ENCODE measurements at regions of chr16 and their contacts with region 1.

Region 1: GRCh38 chr16:66247516-66248481 is 118.7 kb upstream of the CDH5 start:
- DNase-seq: peak; percentile 88
- ATAC-seq: peak; percentile 82

Region 2: DNA sequence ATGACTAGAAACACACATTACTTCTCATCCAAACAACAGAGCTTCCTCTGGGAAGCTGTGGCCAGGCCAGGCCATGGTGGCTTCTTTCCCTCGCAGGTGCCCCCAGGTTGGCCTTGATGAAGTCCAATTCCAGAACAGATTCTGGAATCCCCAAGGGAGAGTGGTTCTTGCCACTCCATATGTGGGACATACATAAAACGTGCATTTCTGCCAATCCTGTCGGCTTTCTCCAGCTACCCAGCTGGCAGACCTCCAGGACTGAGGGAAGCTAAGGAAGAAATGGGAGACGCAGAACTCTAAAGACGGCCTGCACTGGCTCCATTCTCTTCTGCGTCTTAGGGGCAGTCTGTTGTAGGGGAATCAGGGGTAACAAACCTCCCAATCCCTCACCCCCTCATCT is 100.5 kb before region 1 on chr16:
- intact Hi-C with region 1: loop called (anchors 10 kb)
- DNase-seq: no peak
- ATAC-seq: no peak

Region 3: DNA sequence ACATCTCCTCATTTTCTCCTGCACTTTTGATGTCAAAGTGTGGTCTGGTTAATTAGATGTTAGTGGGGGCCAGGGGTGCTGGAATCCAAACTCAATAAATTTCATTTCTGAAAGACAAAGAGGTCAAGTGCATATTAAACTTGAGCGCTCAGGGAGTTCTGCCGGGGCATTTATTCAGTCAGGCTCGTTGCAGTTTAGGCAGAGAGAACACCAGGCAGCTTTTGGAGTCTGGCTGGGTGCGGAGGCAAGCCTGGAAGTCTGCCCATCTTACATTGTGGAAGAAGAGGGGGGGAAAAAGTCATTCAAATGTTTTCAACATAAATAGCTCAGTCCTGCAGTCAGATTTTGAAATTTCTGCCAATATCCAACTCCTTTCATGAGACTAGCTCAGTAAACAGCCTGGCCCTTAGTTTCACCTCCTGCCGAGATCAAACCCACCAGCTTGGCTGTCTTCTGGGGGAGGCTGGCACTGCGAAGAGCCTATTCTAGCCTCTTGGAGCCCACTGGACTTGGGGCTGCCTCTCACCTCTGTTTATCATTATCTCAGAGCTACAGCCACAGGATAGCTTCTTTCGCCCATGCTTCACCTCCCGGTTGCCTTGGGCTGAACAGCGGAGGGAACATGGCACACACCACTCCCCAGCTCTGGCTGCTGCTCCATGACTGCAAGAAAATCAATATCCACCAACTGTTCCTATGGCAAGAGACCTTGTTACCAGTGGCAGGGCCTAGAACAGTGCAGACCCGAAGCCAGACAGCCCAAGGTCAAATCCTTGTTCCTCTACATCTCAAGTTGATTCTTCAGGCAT is 58.7 kb before region 1 on chr16:
- intact Hi-C with region 1: loop called (anchors 10 kb)
- DNase-seq: no peak
- ATAC-seq: no peak

Region 4: DNA sequence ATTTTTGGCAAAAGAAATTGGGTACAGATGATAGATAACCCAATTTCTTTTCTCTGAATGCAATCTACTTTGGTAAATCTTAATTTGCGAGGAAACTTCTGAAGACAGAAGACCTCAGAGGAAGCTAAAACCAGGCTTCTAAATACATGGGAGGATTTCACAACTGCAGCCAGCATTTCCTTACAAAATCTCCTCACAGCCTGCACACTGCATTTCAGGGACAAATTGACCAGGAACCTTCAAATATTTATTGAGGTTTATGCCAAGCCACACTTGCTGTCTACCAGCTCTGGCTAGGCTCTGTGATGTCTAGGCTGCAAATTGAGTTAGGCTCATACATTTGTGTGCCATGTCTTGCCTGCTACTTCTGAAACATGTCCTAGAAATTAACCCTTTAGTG is 48.6 kb before region 1 on chr16:
- intact Hi-C with region 1: no loop called
- DNase-seq: no peak
- ATAC-seq: no peak

Region 5: DNA sequence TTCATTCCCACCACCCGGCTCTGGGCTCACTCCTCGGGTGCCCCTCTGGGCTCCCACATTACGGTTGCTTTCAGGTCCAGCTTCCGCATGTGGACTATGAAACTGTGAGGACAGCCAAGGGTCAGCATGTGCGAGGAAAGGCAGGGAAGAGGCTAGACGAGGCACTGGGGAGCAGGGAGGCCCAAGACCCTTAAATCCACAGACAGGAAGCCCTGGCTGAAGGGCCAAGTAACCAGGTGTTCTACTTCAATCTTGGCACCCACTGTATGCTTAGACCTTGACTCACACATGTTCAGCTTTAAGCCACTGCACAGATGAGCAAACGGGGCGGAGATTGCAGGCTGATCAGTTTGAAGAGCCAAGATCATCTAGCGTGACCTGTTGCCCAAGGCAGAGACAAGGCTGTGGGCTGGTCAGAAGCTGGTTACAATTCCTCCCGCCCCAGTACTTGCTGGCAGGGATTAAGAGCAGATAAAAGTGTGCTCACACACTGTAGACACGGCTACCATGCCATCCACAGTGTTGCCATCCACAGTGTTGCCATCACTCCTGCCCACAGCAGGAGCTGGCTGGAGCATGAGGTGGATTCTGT is 740.5 kb after region 1 on chr16 and contains the start of gene CES4A:
- intact Hi-C with region 1: no loop called
- DNase-seq: no peak
- ATAC-seq: no peak
- total RNA-seq, gene CES4A: 6.2 TPM

Measured in Right ventricle myocardium superior (tissue), 1 donor.